Left ventricle myocardium superior (tissue), 1 donor: ENCODE measurements at regions of chr20 and their contacts with region 1.

Region 1: GRCh38 chr20:19784511-19785172 is 26.6 kb downstream of the RIN2 start:
- DNase-seq: peak; percentile 67
- ATAC-seq: peak; percentile 75

Region 2: DNA sequence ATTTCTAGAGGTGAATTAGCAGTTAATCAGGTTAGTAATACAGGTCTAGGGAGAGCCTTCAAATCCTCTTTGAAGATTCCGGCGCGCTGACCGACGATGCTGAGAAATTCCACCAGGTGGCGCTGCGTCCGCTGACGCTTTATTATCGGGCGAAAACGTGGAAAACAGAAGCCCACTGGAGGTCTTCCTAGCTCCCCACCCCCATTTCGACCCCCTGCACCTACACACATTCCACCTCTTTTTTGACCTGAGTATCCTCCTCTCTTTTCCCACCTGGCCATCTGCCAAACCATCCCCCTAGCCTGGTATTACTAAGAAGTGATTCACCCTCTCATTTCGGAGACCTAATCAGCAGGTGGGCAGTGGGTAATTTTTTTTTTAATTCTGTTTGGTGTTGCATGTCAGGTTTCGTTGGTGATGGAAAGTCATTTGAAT is 91.9 kb before region 1 on chr20:
- intact Hi-C with region 1: loop called (anchors 10 kb)
- DNase-seq: peak; percentile 75
- ATAC-seq: peak; percentile 31

Region 3: DNA sequence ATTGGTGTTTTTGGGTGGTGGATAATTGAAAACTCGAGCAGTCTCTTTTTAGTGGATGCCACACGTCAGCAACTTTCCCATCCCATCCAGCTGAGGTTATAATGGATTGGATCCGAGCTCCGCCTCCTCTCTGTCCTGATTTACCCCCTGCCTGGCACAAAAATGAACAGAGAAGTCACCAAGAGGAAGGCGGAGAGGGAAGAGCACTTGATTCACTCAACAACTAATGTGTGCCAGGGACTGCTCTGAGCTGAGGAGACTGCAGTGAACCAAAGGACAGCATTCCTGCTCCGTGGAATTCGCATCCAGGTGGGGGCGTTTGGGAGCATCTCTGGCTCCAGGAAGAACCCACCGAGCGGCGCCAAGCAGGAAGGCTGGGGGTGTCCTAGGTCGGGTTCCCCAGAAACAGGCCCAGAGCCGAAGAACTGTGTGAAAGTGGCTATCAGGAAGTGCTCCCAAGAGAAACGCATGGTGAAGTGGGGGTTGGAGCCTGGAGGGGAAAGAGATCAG is 136.7 kb after region 1 on chr20:
- intact Hi-C with region 1: no loop called
- DNase-seq: peak; percentile 53
- ATAC-seq: peak; percentile 92